Head of caudate nucleus (tissue), 42 donors: ENCODE measurements at regions of chr11 and their contacts with region 1.

Region 1: GRCh38 chr11:122108192-122108799 is 7.7 kb downstream of the BLID start:
- DNase-seq: peak in 31 of 42 donors; percentile 30 to 91 (median 63)

Region 2: DNA sequence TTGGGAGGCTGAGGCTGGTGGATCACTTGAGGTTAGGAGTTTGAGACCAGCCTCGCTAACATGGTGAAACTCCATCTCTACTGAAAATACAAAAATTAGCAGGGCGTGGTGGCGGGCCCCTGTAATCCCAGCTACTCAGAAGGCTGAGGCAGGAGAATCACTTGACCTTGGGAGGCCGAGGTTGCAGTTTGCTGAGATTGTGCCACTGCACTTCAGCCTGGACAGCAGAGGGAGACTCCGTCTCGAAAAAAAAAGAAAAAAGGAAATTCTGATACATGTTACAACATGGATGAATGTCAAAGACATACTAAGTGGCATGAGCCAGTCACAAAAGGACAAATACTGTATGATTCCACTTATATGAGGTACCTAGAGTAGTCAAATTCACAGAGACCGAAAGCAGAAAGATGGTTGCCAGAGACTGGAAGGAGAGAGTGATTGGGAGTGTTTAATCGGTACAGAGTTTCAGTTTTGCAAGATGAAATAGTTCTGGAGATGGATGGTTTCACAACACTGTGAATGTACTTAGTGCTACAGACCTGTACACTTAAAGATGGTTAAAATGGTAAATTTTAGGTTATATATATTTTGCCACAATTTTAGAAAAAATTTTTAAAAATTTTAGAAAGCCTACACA is 84.6 kb before region 1 on chr11:
- intact Hi-C with region 1: no loop called
- DNase-seq: peak in 1 of 42 donors; percentile 9

Region 3: DNA sequence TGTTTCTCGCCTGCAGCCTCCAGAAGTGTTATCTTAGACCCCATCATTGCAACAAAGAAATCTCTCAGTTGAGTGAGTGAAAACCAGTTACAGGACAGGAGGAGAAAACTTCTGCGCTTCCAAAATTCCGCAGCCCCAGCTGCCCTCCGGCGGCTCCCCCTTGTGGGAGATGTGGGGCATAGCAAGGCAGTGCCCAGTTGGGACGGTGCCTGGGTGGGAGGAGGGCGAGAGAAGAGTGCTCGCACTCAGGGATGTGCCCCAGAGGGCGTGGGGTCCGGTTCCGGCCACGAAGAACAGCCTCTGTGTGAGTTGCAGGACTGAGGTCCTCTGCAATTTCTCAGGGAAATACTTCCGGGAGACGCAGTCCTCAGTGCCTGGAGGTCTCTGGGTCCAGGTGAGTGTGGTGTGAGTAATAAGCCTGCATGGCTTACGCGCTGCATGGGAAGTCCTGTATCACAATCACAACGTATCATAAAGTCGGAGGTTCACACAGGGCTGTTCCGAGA is 94.7 kb after region 1 on chr11:
- intact Hi-C with region 1: loop called (anchors 2 kb)
- DNase-seq: peak; percentile 44 to 93 (median 81)

Region 4: GRCh38 chr11:122309262-122309925 is 201.1 kb after region 1 on chr11:
- intact Hi-C with region 1: loop called (anchors 10 kb)
- DNase-seq: peak; percentile 24 to 84 (median 57)